ENCODE measurements at regions of chr11 and their contacts with region 1.

Region 1: GRCh38 chr11:45771566-45772448 is 33.1 kb upstream of the SLC35C1 start:
- DNase-seq: peak; percentile 83
- ATAC-seq: peak; percentile 80
- H3K4me3 ChIP-seq: peak overlapping the region; percentile 35 to 86 (median 63)
- H3K4me3 Mint-ChIP-seq: peak overlapping the region; percentile 90
- H3K27ac ChIP-seq: peak overlapping the region in 1 of 2 donors; percentile 8
- H3K27ac Mint-ChIP-seq: peak overlapping the region; percentile 50
- H3K4me1 ChIP-seq: peaks cover 6 to 16% of the 10 kb centered on the region in 2 donors
- H3K4me1 Mint-ChIP-seq: peaks cover 18% of the 10 kb centered on the region
- H3K27me3 ChIP-seq: no peaks in the 10 kb centered on the region
- H3K27me3 Mint-ChIP-seq: peaks cover 7% of the 10 kb centered on the region
- CTCF ChIP-seq: peak; percentile 77

Region 2: GRCh38 chr11:45339729-45340519 is 431.9 kb before region 1 on chr11:
- CTCF ChIA-PET with region 1: interaction called, 12 read pairs
- POLR2A ChIA-PET with region 1: no interaction called
- intact Hi-C with region 1: loop called (anchors 5 kb)
- DNase-seq: peak; percentile 93
- ATAC-seq: peak; percentile 100
- H3K4me3 ChIP-seq: peak overlapping the region; percentile 23 to 65 (median 50)
- H3K4me3 Mint-ChIP-seq: peak overlapping the region; percentile 92
- H3K27ac ChIP-seq: no peak overlapping the region
- H3K27ac Mint-ChIP-seq: peak overlapping the region; percentile 76
- H3K4me1 ChIP-seq: peaks cover 8 to 13% of the 10 kb centered on the region in 2 donors
- H3K4me1 Mint-ChIP-seq: peaks cover 18% of the 10 kb centered on the region
- H3K27me3 ChIP-seq: peaks cover 0 to 4% (median 2%) of the 10 kb centered on the region in 4 experiments
- H3K27me3 Mint-ChIP-seq: peaks cover 26% of the 10 kb centered on the region
- CTCF ChIP-seq: peak; percentile 90

Region 3: DNA sequence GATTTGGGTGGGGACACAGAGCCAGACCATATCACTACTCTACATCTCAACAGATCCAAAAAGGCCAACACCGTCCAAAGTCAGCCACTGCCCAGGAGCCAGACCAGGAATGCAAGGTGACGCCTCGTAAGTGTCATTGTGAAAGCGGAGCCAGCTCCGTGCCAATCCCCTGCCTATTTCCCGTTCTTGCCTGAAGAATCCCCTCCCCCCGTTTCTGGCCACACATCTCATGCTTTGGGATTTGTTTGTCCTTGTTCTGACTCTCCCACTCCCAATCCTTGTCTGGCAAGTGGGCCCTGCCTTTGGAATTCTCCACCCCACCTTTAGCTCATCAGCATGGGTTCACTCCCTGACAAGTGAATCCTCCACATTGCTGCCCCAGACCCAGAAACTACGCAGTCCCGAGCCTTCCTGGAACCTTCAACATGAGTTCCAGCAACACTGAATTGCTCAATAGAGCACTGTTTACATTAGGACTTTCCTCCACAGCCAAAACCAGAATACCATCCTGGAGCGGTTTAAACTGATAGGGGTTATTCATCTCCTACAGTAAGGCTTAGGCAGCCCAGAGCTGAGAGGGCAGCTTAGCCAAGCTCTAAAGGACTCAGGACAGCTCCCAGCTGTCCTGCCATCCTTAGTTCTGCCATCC is 27.1 kb after region 1 on chr11:
- CTCF ChIA-PET with region 1: interaction called, 13 read pairs
- POLR2A ChIA-PET with region 1: no interaction called
- intact Hi-C with region 1: loop called (anchors 1 kb)
- DNase-seq: no peak
- ATAC-seq: no peak
- H3K4me3 ChIP-seq: no peak overlapping the region
- H3K4me3 Mint-ChIP-seq: no peak overlapping the region
- H3K27ac ChIP-seq: no peak overlapping the region
- H3K27ac Mint-ChIP-seq: no peak overlapping the region
- H3K4me1 ChIP-seq: peaks cover 0 to 4% of the 10 kb centered on the region in 2 donors
- H3K4me1 Mint-ChIP-seq: peaks cover 2% of the 10 kb centered on the region
- H3K27me3 ChIP-seq: no peaks in the 10 kb centered on the region
- H3K27me3 Mint-ChIP-seq: no peaks in the 10 kb centered on the region
- CTCF ChIP-seq: no peak

Region 4: DNA sequence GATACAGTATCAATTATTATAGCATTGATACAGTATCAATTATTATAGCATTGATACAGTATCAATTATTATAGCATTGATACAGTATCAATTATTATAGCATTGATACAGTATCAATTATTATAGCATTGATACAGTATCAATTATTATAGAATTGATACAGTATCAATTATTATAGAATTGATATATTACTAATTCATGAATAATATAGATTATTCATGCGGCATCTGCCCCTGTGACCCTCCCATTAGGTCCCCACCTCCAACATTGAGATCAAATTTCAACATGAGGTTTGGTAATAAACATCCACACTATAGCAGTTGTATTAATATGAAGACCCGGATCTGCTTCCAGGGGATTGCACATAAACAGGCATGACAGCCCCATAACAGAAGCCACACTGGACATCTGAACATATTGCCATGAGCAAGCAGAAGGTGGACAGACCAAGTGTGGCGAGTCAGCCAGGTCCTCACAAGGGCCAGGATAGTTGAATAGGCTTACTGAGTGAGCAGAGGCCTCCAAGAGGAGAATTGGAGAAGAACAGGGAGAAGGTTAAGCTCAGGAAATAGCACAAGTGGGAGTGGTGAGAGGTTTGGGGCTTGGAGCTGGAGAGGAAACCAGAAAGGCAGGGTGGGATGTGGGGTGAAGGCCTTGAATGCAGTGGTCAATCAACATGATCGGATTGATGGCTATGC is 43.8 kb after region 1 on chr11:
- CTCF ChIA-PET with region 1: interaction called, 13 read pairs
- POLR2A ChIA-PET with region 1: no interaction called
- intact Hi-C with region 1: no loop called
- DNase-seq: no peak
- ATAC-seq: no peak
- H3K4me3 ChIP-seq: no peak overlapping the region
- H3K4me3 Mint-ChIP-seq: no peak overlapping the region
- H3K27ac ChIP-seq: no peak overlapping the region
- H3K27ac Mint-ChIP-seq: peak overlapping the region; percentile 68
- H3K4me1 ChIP-seq: peaks cover 19 to 33% of the 10 kb centered on the region in 2 donors
- H3K4me1 Mint-ChIP-seq: peaks cover 35% of the 10 kb centered on the region
- H3K27me3 ChIP-seq: no peaks in the 10 kb centered on the region
- H3K27me3 Mint-ChIP-seq: no peaks in the 10 kb centered on the region
- CTCF ChIP-seq: no peak

Region 5: DNA sequence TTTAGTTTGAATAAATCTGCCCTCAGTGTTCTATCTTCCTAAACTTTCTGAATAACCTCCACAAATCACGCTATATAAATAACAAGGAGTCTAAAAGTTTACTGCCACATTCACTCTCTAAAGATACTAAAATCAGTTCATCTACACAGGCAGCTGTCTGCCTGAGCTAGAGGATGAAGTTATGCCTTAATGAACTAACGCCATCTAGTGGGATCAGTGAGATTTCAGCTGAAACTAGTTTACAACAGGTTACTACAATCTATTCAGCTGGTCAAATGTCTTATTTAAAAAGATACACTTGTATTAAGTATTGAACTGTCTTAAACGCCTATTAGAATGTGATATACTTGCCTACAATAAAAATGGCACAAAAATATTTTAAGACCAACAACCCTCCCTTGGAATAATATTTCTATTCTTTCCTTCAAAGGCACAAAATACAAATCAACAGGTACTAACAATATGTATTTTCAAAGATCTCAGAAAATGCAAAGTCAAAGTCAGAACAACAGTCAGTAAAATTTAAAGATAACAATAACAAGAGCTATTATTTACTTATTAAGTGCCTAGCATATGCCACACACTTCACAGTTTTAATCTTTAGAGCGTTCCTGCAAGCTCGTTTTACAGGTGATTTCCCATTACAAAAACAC is 234.7 kb after region 1 on chr11:
- CTCF ChIA-PET with region 1: interaction called, 76 read pairs
- POLR2A ChIA-PET with region 1: no interaction called
- intact Hi-C with region 1: no loop called
- DNase-seq: peak; percentile 79
- ATAC-seq: peak; percentile 82
- H3K4me3 ChIP-seq: no peak overlapping the region
- H3K4me3 Mint-ChIP-seq: no peak overlapping the region
- H3K27ac ChIP-seq: no peak overlapping the region
- H3K27ac Mint-ChIP-seq: no peak overlapping the region
- H3K4me1 ChIP-seq: no peaks in the 10 kb centered on the region
- H3K4me1 Mint-ChIP-seq: peaks cover 1% of the 10 kb centered on the region
- H3K27me3 ChIP-seq: no peaks in the 10 kb centered on the region
- H3K27me3 Mint-ChIP-seq: no peaks in the 10 kb centered on the region
- CTCF ChIP-seq: peak; percentile 84

Measured in B cell (primary cell).